Activated naive CD4-positive, alpha-beta T cell treated with anti-CD3 and anti-CD28 coated beads, Interleukin-2, amount 10 ng/mL, durations not matched to agents 7 days and 5 days (primary cell): ENCODE measurements at regions of chr6 and their contacts with region 1.

Region 1: GRCh38 chr6:132669690-132670291 is 10.8 kb upstream of the TAAR1 start:
- DNase-seq: no peak
- H3K4me3 Mint-ChIP-seq: no peak overlapping the region
- H3K27ac Mint-ChIP-seq: no peak overlapping the region
- H3K4me1 Mint-ChIP-seq: peaks cover 7% of the 10 kb centered on the region
- H3K27me3 Mint-ChIP-seq: peaks cover 12% of the 10 kb centered on the region

Region 2: GRCh38 chr6:132569170-132569569 is 100.6 kb before region 1 on chr6:
- CTCF ChIA-PET with region 1: no interaction called
- DNase-seq: no peak
- H3K4me3 Mint-ChIP-seq: no peak overlapping the region
- H3K27ac Mint-ChIP-seq: no peak overlapping the region
- H3K4me1 Mint-ChIP-seq: no peaks in the 10 kb centered on the region
- H3K27me3 Mint-ChIP-seq: peaks cover 12% of the 10 kb centered on the region

Region 3: GRCh38 chr6:132768051-132768517 is 98.3 kb after region 1 on chr6:
- CTCF ChIA-PET with region 1: interaction called, 86 read pairs
- DNase-seq: peak; percentile 50
- H3K4me3 Mint-ChIP-seq: no peak overlapping the region
- H3K27ac Mint-ChIP-seq: no peak overlapping the region
- H3K4me1 Mint-ChIP-seq: peaks cover 15% of the 10 kb centered on the region
- H3K27me3 Mint-ChIP-seq: no peaks in the 10 kb centered on the region

Region 4: GRCh38 chr6:132780770-132781371 is 111.1 kb after region 1 on chr6:
- CTCF ChIA-PET with region 1: interaction called, 10 read pairs
- DNase-seq: peak; percentile 25
- H3K4me3 Mint-ChIP-seq: no peak overlapping the region
- H3K27ac Mint-ChIP-seq: no peak overlapping the region
- H3K4me1 Mint-ChIP-seq: no peaks in the 10 kb centered on the region
- H3K27me3 Mint-ChIP-seq: no peaks in the 10 kb centered on the region

Region 5: GRCh38 chr6:132798869-132799538 is 129.2 kb after region 1 on chr6:
- CTCF ChIA-PET with region 1: interaction called, 15 read pairs
- DNase-seq: peak; percentile 76
- H3K4me3 Mint-ChIP-seq: no peak overlapping the region
- H3K27ac Mint-ChIP-seq: no peak overlapping the region
- H3K4me1 Mint-ChIP-seq: peaks cover 16% of the 10 kb centered on the region
- H3K27me3 Mint-ChIP-seq: no peaks in the 10 kb centered on the region